WTC11 (cell line): ENCODE measurements at regions of chr3 and their contacts with region 1.

Region 1: GRCh38 chr3:128969993-128970739 is 23.7 kb downstream of the CFAP92 start:
- DNase-seq: peak; percentile 69
- ATAC-seq: peak; percentile 81
- H3K4me3 Mint-ChIP-seq: no peak overlapping the region
- H3K27ac Mint-ChIP-seq: no peak overlapping the region
- H3K4me1 Mint-ChIP-seq: no peaks in the 10 kb centered on the region
- H3K27me3 Mint-ChIP-seq: no peaks in the 10 kb centered on the region
- CTCF ChIP-seq: peak; percentile 71

Region 2: DNA sequence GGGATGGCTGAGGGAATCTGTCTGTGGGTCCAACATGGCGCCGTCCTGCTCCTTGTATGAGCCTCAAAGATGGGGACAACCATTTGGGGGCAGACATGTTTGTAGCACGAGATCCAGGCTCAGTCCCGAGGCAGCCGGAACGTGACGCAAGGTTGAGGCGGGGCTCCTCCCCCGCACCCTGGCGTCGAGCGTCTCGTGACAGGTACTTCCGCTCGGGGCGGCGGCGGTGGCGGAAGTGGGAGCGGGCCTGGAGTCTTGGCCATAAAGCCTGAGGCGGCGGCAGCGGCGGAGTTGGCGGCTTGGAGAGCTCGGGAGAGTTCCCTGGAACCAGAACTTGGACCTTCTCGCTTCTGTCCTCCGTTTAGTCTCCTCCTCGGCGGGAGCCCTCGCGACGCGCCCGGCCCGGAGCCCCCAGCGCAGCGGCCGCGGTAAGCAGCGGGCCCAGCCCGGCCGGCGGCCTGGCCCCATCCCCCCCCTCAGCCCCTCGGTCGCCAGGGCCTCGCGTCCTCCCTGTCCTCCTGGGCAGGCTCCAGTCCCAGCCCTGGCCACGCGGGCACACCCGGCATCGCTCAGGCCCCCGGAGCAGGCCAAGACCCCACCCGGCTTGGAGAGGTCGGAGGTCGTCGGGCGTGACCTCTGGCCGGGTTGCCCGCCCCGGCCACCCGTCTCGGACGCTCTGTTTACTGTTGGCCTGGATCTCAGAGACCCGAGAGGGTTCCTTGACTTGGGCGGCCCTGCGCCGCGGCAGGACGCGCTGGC is 244.1 kb before region 1 on chr3 and contains the start of gene RAB7A:
- CTCF ChIA-PET with region 1: no interaction called
- POLR2A ChIA-PET with region 1: no interaction called
- DNase-seq: peak; percentile 96
- ATAC-seq: peak; percentile 91
- H3K4me3 Mint-ChIP-seq: peak within 1 kb of the TSS; percentile 92
- H3K27ac Mint-ChIP-seq: peak within 1 kb of the TSS; percentile 92
- H3K4me1 Mint-ChIP-seq: peaks cover 81% of the 10 kb centered on the region
- H3K27me3 Mint-ChIP-seq: no peaks in the 10 kb centered on the region
- CTCF ChIP-seq: no peak
- total RNA-seq, gene RAB7A: 166 to 184 TPM (median 184 TPM) in 3 replicates

Region 3: GRCh38 chr3:128917291-128917690 is 52.9 kb before region 1 on chr3:
- CTCF ChIA-PET with region 1: no interaction called
- POLR2A ChIA-PET with region 1: no interaction called
- DNase-seq: no peak
- ATAC-seq: no peak
- H3K4me3 Mint-ChIP-seq: no peak overlapping the region
- H3K27ac Mint-ChIP-seq: no peak overlapping the region
- H3K4me1 Mint-ChIP-seq: no peaks in the 10 kb centered on the region
- H3K27me3 Mint-ChIP-seq: peaks cover 22% of the 10 kb centered on the region
- CTCF ChIP-seq: no peak

Region 4: GRCh38 chr3:129007792-129008191 is 37.6 kb after region 1 on chr3:
- CTCF ChIA-PET with region 1: interaction called, 14 read pairs
- POLR2A ChIA-PET with region 1: no interaction called
- DNase-seq: no peak
- ATAC-seq: no peak
- H3K4me3 Mint-ChIP-seq: no peak overlapping the region
- H3K27ac Mint-ChIP-seq: no peak overlapping the region
- H3K4me1 Mint-ChIP-seq: no peaks in the 10 kb centered on the region
- H3K27me3 Mint-ChIP-seq: peaks cover 56% of the 10 kb centered on the region
- CTCF ChIP-seq: no peak

Region 5: DNA sequence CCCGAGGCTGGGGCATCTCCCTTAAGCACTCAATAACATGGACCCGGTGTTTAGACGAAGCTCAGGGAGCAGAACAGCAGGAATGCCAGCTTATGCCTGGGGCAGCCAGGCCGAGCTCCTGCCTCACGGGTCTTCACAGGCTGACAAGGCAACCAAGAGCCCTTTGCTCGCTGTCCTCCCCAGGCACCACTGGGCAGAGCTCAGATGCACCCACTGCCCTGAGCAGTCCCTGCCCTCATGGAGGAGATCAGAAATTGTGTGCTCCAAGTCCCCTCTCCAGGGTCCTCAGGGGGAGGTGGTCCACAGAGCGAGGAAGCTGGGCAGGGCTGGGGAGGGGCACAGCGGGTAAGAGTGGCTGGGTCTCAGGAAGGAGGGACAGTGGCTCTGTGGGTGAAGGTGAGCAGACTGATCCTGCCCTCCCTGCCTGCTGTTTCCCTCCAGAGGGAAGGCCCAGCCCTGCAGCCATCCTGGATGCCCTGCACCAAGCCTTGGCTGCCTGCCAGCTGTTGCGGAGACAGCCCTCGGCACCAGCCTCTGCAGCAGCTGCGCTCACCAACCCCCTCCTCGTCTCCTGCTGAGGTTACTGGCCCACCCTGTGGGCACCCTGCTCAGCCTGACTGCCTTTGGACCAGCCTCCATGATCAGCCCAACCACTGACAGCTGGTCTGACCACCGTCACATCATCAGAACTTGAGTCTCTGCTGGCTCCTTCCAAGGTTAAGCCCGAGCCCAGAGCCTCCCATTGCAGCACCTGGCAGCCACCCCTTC is 69.3 kb after region 1 on chr3:
- CTCF ChIA-PET with region 1: interaction called, 13 read pairs
- POLR2A ChIA-PET with region 1: no interaction called
- DNase-seq: no peak
- ATAC-seq: no peak; the same call in 1 of the 2 replicates
- H3K4me3 Mint-ChIP-seq: no peak overlapping the region
- H3K27ac Mint-ChIP-seq: no peak overlapping the region
- H3K4me1 Mint-ChIP-seq: peaks cover 20% of the 10 kb centered on the region
- H3K27me3 Mint-ChIP-seq: peaks cover 20% of the 10 kb centered on the region
- CTCF ChIP-seq: no peak

Region 6: GRCh38 chr3:129068291-129068886 is 98.2 kb after region 1 on chr3:
- CTCF ChIA-PET with region 1: interaction called, 26 read pairs
- POLR2A ChIA-PET with region 1: no interaction called
- DNase-seq: no peak
- ATAC-seq: no peak
- H3K4me3 Mint-ChIP-seq: no peak overlapping the region
- H3K27ac Mint-ChIP-seq: no peak overlapping the region
- H3K4me1 Mint-ChIP-seq: no peaks in the 10 kb centered on the region
- H3K27me3 Mint-ChIP-seq: peaks cover 4% of the 10 kb centered on the region; the same call in 1 of the 2 replicates
- CTCF ChIP-seq: no peak

Region 7: GRCh38 chr3:129120254-129121004 is 150.3 kb after region 1 on chr3:
- CTCF ChIA-PET with region 1: interaction called, 54 read pairs
- POLR2A ChIA-PET with region 1: interaction called, 9 read pairs
- DNase-seq: peak; percentile 85
- ATAC-seq: peak; percentile 3
- H3K4me3 Mint-ChIP-seq: peak overlapping the region; percentile 83
- H3K27ac Mint-ChIP-seq: peak overlapping the region; percentile 99
- H3K4me1 Mint-ChIP-seq: peaks cover 56% of the 10 kb centered on the region
- H3K27me3 Mint-ChIP-seq: peaks cover 4% of the 10 kb centered on the region; the same call in 1 of the 2 replicates
- CTCF ChIP-seq: no peak